H1 (cell line): ENCODE measurements at regions of chr19 and their contacts with region 1.

Region 1: GRCh38 chr19:51158474-51159129 is 16.5 kb downstream of the SIGLEC7 start:
- DNase-seq: peak; percentile 56 to 95
- H3K4me3 ChIP-seq: no peak overlapping the region
- H3K27ac ChIP-seq: no peak overlapping the region
- H3K4me1 ChIP-seq: no peaks in the 10 kb centered on the region
- H3K27me3 ChIP-seq: 0 out of 7 replicates have a peak, but pooled peaks cover 0 to 3% (median 0%) of the 10 kb centered on the region in 4 experiments
- CTCF ChIP-seq: peak; percentile 84 to 91 (median 89)
- EP300 ChIP-seq: no peak
- POLR2A ChIP-seq: no peak
- RAD21 ChIP-seq: peak; percentile 87 to 88

Region 2: GRCh38 chr19:51129716-51130115 is 28.9 kb before region 1 on chr19:
- CTCF ChIA-PET with region 1: interaction called, 16 read pairs
- POLR2A ChIA-PET with region 1: no interaction called
- DNase-seq: no peak
- H3K4me3 ChIP-seq: no peak overlapping the region
- H3K27ac ChIP-seq: no peak overlapping the region
- H3K4me1 ChIP-seq: no peaks in the 10 kb centered on the region
- H3K27me3 ChIP-seq: no peaks in the 10 kb centered on the region; a peak in 1 of 7 replicates
- CTCF ChIP-seq: no peak
- EP300 ChIP-seq: no peak
- POLR2A ChIP-seq: no peak
- RAD21 ChIP-seq: no peak

Region 3: GRCh38 chr19:51142119-51142518 is 16.5 kb before region 1 on chr19 and contains the start of gene SIGLEC7:
- CTCF ChIA-PET with region 1: interaction called, 62 read pairs
- POLR2A ChIA-PET with region 1: no interaction called
- DNase-seq: no peak
- H3K4me3 ChIP-seq: no peak within 1 kb of the TSS
- H3K27ac ChIP-seq: no peak within 1 kb of the TSS; the same call in 1 of the 2 replicates
- H3K4me1 ChIP-seq: peaks cover 6 to 14% (median 8%) of the 10 kb centered on the region in 4 experiments; a peak in 5 of 7 replicates
- H3K27me3 ChIP-seq: no peaks in the 10 kb centered on the region
- CTCF ChIP-seq: no peak
- EP300 ChIP-seq: no peak
- POLR2A ChIP-seq: no peak
- RAD21 ChIP-seq: no peak
- total RNA-seq, gene SIGLEC7: not detected in 2 replicates

Region 4: DNA sequence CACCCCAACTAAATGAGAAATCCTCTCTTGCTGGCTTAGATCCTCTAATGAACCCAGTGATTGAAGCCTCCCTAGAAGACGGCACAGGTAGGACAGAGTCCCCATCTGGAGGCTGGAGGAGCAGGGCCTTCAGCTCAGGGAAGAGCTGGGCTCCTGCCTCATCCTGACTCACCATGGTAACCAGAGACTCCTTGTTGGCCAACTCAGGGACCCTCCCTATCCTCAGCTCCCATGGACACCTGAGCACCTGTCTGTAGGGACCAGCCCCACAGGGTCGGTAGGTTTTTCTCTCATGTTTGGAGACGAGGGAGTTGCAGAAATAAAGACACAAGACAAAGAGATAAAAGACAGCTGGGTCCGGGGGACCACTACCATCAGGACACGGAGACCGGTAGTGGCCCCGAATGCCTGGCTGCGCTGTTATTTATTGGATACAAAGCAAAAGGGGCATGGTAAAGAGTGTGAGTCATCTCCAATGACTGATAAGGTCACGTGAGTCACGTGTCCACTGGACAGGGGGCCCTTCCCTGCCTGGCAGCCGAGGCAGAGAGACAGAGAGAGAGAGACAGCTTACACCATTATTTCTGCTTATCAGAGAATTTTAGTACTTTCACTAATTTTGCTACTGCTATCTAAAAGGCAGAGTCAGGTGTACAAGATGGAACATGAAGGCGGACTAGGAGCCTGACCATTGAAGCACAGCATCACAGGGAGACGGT is 10.1 kb after region 1 on chr19:
- CTCF ChIA-PET with region 1: interaction called, 34 read pairs
- POLR2A ChIA-PET with region 1: no interaction called
- DNase-seq: no peak
- H3K4me3 ChIP-seq: no peak overlapping the region
- H3K27ac ChIP-seq: no peak overlapping the region
- H3K4me1 ChIP-seq: no peaks in the 10 kb centered on the region
- H3K27me3 ChIP-seq: peaks cover 0 to 1% (median 0%) of the 10 kb centered on the region in 4 experiments; a peak in 3 of 7 replicates
- CTCF ChIP-seq: no peak
- EP300 ChIP-seq: no peak
- POLR2A ChIP-seq: no peak
- RAD21 ChIP-seq: no peak

Region 5: DNA sequence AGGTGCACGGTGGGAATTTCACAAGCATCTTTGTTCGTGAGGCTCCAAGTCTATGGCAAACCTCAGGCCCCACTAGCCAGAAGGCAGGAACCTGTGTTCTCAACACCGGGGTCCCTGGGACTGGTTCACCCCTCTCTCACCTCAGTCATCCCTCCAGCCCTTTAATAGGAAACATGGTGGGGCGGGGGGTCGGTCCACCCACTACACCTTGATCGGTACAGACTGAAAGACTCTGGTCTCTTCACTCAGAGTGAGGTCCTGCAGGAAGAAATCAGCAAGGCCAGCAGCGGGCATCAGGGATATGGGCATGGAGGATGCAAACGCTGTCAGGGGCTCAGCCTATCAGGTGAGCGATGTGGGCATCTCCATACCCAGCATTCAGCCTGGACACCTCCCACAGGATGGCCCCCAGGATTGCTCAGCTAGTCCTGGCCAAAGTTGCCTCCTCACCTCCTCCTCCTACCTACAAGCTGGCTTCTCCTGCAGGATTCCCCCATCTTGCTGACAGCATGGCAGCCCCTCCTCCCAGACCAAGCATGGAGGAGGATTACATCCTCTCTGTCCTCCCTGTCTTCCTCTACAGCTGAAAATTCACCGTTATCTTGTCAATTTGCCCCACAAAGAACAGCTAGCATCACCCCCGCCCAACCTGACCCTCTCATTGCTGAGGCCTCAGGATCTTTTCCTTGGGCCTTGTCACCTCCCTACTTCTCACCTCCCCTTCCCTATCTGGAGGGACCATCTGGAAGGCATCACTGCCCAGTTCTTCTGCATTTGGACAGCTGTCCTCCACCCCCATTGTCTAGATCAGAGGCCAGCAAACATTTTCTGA is 29.0 kb after region 1 on chr19:
- CTCF ChIA-PET with region 1: interaction called, 14 read pairs
- POLR2A ChIA-PET with region 1: no interaction called
- DNase-seq: no peak
- H3K4me3 ChIP-seq: no peak overlapping the region
- H3K27ac ChIP-seq: no peak overlapping the region
- H3K4me1 ChIP-seq: no peaks in the 10 kb centered on the region; a peak in 1 of 7 replicates
- H3K27me3 ChIP-seq: peaks cover 0 to 6% (median 0%) of the 10 kb centered on the region in 4 experiments; a peak in 2 of 7 replicates
- CTCF ChIP-seq: no peak
- EP300 ChIP-seq: no peak
- POLR2A ChIP-seq: no peak
- RAD21 ChIP-seq: no peak

Region 6: GRCh38 chr19:51259348-51260245 is 101.0 kb after region 1 on chr19:
- CTCF ChIA-PET with region 1: interaction called, 82 read pairs
- POLR2A ChIA-PET with region 1: no interaction called
- DNase-seq: peak; percentile 15 to 69
- H3K4me3 ChIP-seq: peak overlapping the region in 1 of 4 experiments; percentile 27; a peak in 1 of 8 replicates
- H3K27ac ChIP-seq: no peak overlapping the region
- H3K4me1 ChIP-seq: peaks cover 0 to 6% (median 5%) of the 10 kb centered on the region in 4 experiments; a peak in 4 of 7 replicates
- H3K27me3 ChIP-seq: no peaks in the 10 kb centered on the region
- CTCF ChIP-seq: peak; percentile 66 to 87 (median 82)
- EP300 ChIP-seq: no peak
- POLR2A ChIP-seq: no peak
- RAD21 ChIP-seq: peak; percentile 82 to 85